ENCODE measurements at regions of chr7 and their contacts with region 1.

Region 1: DNA sequence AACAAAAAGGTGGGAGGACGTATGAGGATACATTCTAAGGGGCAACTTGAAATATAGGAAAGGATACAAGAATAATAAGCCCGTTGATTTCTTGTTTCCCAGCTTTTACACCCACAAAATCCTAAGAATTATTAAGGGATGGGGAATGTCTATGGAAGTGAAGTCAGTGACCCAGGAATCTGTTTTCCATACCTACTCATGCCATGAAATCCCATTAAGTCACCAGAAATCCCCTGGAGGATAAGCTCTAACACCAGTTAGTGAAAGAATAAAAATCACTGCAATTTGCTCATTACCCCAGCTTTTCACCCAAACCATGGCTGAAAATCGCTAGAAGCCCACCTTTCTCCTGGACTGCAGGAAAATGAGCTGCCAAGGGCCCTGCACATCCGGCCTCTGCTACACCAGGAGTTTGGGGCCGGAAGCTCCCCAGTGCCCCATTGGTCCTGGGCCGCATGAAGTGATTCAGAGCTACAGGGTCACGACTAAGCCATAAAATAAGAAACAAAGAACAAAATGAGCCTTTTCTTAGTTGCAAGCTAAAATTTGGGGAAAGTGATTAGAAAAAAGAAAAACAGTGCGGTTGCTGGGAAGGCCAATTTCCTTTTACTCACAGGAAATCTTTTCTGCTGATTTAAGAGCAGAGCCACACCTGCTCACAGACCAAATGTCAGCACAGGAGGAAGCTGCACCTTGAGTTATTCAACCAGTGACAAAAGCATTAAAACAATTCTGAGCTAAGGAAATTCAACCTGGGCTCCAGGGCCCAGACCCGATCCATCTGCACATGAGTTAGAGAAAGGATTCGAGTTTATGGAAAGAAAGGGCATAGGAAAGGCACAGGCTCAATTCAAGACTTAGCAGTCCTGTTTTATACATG is 40.3 kb downstream of the HIPK2 start:
- DNase-seq: peak in 6 of 9 donors; percentile 11 to 48 (median 42)
- ATAC-seq: peak; percentile 62
- H3K4me3 ChIP-seq: peak overlapping the region; percentile 35
- H3K4me3 Mint-ChIP-seq: peak overlapping the region; percentile 49 to 86 (median 76)
- H3K27ac ChIP-seq: peak overlapping the region; percentile 56
- H3K27ac Mint-ChIP-seq: peak overlapping the region; percentile 85 to 97 (median 90)
- H3K4me1 ChIP-seq: peaks cover 0 to 33% of the 10 kb centered on the region in 2 donors
- H3K4me1 Mint-ChIP-seq: peaks cover 39 to 92% (median 87%) of the 10 kb centered on the region in 7 donors
- H3K27me3 ChIP-seq: no peaks in the 10 kb centered on the region
- H3K27me3 Mint-ChIP-seq: no peaks in the 10 kb centered on the region

Region 2: DNA sequence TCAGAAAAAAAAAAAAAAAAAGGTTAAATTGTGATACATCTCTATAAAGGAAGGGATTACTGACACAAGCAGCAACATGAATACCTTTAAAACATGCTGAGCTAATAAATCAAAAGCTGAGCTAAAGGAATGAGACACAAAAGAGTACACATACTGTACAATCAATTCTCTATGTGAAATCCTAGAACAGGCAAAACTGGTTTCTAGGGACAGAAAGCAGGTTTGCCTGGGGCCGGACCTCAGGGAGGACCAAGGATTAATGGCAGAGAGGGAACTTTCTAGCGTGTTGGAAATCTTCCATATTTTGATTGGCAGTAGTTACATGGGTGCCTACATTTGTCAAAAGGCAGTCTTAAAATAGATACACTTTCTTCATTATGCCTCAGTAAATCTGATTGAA is 306.5 kb before region 1 on chr7:
- CTCF ChIA-PET with region 1: no interaction called
- POLR2A ChIA-PET with region 1: no interaction called
- intact Hi-C with region 1: no loop called
- DNase-seq: no peak
- ATAC-seq: no peak
- H3K4me3 ChIP-seq: no peak overlapping the region
- H3K4me3 Mint-ChIP-seq: no peak overlapping the region
- H3K27ac ChIP-seq: no peak overlapping the region
- H3K27ac Mint-ChIP-seq: no peak overlapping the region
- H3K4me1 ChIP-seq: peaks cover 0 to 3% of the 10 kb centered on the region in 2 donors
- H3K4me1 Mint-ChIP-seq: peaks cover 6 to 18% (median 12%) of the 10 kb centered on the region in 7 donors
- H3K27me3 ChIP-seq: no peaks in the 10 kb centered on the region
- H3K27me3 Mint-ChIP-seq: no peaks in the 10 kb centered on the region

Region 3: DNA sequence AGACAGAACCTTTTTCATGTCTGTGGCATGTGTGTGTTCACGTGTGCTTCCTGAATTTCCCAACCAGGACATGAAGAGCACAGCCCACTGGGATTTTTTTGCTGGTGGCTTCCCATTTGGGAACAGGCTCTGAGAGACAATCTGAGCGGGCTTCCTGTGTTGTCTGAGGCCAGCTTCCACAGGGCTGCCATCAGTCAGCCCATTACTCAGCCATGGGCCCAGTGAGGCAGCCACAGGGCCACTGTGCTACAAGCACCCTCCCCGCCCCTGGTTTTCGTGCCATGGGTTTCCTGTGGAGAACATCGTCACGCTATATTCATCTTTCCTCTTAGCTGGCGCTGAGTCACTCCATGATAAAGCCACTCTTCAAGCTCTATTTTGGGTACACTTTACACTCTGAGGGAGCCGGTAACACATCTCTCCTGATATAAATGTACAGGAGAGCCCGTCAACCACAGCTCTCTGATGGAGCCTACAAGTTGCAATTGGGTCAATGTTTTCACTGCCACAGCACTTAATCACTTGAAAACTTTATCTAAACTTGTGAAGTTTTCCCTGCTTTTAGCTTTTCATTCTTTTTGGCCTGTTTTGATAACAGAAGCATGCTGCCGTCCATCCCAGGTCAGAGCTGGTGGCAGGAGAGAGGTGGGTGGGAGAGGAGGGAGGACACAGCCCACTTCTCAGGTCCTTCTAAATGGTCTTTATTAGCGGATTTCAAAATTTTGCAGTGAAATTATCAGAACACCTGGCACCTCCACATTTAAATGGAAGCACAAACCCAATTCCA is 56.6 kb before region 1 on chr7:
- CTCF ChIA-PET with region 1: no interaction called
- POLR2A ChIA-PET with region 1: no interaction called
- intact Hi-C with region 1: loop called in 1 of 2 experiments (anchors 5 kb)
- DNase-seq: peak in 1 of 9 donors; percentile 77
- ATAC-seq: peak; percentile 93
- H3K4me3 ChIP-seq: no peak overlapping the region
- H3K4me3 Mint-ChIP-seq: peak overlapping the region in 4 of 10 donors; percentile 11 to 59 (median 33)
- H3K27ac ChIP-seq: no peak overlapping the region
- H3K27ac Mint-ChIP-seq: peak overlapping the region in 7 of 9 donors; percentile 13 to 72 (median 38)
- H3K4me1 ChIP-seq: peaks cover 3 to 22% of the 10 kb centered on the region in 2 donors
- H3K4me1 Mint-ChIP-seq: peaks cover 16 to 71% (median 52%) of the 10 kb centered on the region in 7 donors
- H3K27me3 ChIP-seq: no peaks in the 10 kb centered on the region
- H3K27me3 Mint-ChIP-seq: no peaks in the 10 kb centered on the region

Region 4: DNA sequence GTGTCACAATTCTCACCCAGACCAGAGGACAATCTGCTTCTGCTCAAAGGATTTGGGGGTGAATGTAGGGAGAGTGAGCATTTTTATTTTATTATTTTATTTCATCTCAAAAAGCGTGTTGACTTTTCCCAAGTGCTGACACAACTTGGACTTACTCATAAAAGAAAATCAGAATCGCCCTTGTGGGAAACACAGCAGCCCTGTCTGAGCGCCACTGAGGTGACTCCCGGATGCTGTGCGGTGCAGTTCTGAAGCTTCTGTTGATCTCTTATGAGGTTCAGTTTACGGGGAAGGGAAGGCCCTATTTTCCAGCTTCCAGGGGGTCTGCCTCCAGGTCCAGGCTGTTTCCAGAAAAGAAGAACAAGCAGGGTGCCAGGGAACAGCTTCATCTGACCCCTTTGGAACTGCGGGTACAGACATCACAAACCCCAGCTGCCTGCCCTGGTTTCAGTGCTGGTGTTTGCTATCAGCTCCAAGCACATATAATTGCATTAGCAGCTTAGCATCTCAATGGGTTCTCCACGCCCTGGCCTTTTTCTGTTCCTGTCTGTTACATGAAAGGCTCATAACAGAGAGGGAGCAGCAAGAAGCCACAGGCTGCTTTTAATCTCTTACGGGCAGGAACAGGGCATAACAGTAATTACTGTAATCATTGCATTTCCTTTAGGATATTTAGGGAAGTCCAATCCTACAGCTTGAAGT is 272.9 kb after region 1 on chr7:
- CTCF ChIA-PET with region 1: no interaction called
- POLR2A ChIA-PET with region 1: no interaction called
- intact Hi-C with region 1: no loop called
- DNase-seq: no peak
- ATAC-seq: no peak
- H3K4me3 ChIP-seq: no peak overlapping the region
- H3K4me3 Mint-ChIP-seq: no peak overlapping the region
- H3K27ac ChIP-seq: no peak overlapping the region
- H3K27ac Mint-ChIP-seq: no peak overlapping the region
- H3K4me1 ChIP-seq: no peaks in the 10 kb centered on the region
- H3K4me1 Mint-ChIP-seq: no peaks in the 10 kb centered on the region
- H3K27me3 ChIP-seq: no peaks in the 10 kb centered on the region
- H3K27me3 Mint-ChIP-seq: no peaks in the 10 kb centered on the region

Measured in naive thymus-derived CD4-positive, alpha-beta T cell (primary cell).